Body of pancreas (tissue), 4 donors: ENCODE measurements at regions of chr1 and their contacts with region 1.

Region 1: GRCh38 chr1:27664291-27664690 is 7.7 kb downstream of the IFI6 start:
- DNase-seq: no peak
- ATAC-seq: no peak
- H3K4me3 ChIP-seq: no peak overlapping the region
- H3K27ac ChIP-seq: no peak overlapping the region
- H3K4me1 ChIP-seq: peaks cover 7% of the 10 kb centered on the region
- H3K27me3 ChIP-seq: no peaks in the 10 kb centered on the region
- CTCF ChIP-seq: no peak
- POLR2A ChIP-seq: no peak

Region 2: DNA sequence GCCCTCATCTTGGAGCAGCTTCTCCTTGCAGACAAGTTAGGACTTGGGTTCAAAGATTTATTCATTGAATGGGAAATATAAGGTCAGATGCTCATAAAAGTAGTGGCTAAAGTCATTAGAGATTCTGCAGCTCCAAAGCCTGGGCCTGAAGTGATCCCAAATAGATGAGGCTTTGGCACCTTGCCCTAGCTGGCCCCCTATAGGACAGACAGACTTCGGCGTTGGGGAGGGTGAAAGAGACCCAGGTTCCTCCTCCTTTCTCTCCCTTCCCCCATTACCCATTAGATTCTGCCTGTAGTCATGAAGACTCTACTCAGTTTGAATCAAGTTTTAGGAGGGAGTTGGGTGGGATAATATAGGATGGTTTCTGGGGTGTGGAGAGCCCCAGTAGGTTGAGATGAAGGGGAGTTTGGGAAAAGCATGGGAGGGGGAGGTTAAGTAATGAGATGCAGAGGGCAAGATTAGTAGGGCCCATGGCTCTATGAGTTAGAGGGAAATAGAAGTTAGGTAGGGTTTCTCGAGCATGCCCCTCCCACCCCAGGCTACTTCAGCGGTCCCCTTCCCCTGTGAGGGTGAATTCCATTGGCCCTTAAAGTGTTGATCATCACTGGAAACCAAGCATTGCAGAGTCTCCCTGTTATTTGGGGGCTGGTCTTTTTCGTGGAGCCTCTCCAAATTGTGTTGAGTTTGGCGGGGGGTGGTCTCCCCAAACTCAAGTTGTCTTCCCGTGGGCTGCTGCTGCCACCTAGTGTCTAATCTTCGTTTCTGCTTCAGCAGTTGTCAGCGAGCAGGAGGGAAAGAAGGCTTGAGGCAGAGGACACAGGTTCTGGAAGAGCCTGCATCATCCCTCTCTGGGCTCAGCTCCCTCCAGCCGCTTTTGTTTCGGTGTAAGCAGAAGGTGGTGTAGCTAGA is 58.2 kb before region 1 on chr1:
- intact Hi-C with region 1: loop called (anchors 2 kb)
- DNase-seq: peak; percentile 54 to 57 (median 56)
- ATAC-seq: no peak
- H3K4me3 ChIP-seq: no peak overlapping the region
- H3K27ac ChIP-seq: no peak overlapping the region
- H3K4me1 ChIP-seq: peaks cover 21% of the 10 kb centered on the region
- H3K27me3 ChIP-seq: no peaks in the 10 kb centered on the region
- CTCF ChIP-seq: peak; percentile 75 to 93 (median 91)
- POLR2A ChIP-seq: no peak